PC-3 (cell line): ENCODE measurements at regions of chr17 and their contacts with region 1.

Region 1: DNA sequence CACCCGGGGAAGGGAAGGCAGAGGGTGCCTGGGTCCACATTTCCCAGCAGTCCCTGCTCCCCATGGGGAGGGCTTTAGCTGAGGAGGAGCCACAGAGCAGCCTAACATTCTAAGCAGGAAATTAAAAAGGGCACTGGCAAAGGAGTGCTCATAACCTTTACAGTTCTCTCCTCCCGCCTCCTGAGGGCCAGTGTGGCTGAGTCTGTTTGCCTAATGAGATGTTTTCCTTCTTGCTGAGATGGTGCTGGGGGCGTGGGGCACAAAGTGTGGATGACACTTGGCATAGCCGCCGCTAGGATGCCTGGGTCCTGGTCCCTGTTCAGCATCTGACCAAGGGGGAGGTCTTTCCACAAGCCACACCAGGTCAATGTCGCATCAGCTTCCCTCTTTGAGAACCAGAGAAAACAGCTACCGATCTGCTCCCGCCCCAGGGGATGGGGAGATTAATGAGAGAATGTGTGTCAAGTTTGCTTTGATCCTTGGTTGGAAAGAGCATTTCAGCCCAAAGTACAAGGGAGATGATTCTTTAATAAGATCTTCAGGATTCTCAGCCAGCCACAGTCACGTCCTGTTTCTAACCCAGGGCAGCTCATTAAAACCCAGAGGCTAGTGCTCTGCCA is 5.8 kb downstream of the KIF18B start:
- DNase-seq: no peak
- ATAC-seq: peak; percentile 64
- H3K4me3 ChIP-seq: no peak overlapping the region
- H3K27ac ChIP-seq: no peak overlapping the region
- H3K4me1 ChIP-seq: peaks cover 56% of the 10 kb centered on the region
- H3K27me3 ChIP-seq: no peaks in the 10 kb centered on the region
- CTCF ChIP-seq: no peak

Region 2: GRCh38 chr17:44844390-44844830 is 97.4 kb before region 1 on chr17:
- CTCF ChIA-PET with region 1: no interaction called
- POLR2A ChIA-PET with region 1: no interaction called
- intact Hi-C with region 1: no loop called
- DNase-seq: no peak
- ATAC-seq: no peak
- H3K4me3 ChIP-seq: no peak overlapping the region
- H3K27ac ChIP-seq: no peak overlapping the region
- H3K4me1 ChIP-seq: no peaks in the 10 kb centered on the region
- H3K27me3 ChIP-seq: no peaks in the 10 kb centered on the region
- CTCF ChIP-seq: no peak

Region 3: DNA sequence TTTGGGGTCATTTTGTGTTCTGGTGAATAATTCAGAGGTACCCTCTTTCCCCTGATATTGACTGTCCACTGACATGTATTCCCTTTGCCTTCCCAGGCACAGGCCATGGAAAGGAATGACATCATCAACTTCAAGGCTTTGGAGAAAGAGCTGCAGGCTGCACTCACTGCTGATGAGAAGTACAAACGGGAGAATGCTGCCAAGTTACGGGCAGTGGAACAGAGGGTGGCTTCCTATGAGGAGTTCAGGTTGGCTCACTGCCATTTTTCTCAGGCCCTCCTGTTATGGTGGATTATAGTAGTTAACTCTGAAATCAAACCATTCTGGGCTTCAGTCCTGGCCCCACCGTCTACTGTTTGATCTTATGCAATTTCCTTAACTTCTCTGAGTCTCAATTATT is 40.9 kb before region 1 on chr17:
- CTCF ChIA-PET with region 1: no interaction called
- POLR2A ChIA-PET with region 1: interaction called, 3 read pairs
- intact Hi-C with region 1: loop called (anchors 2 kb)
- DNase-seq: peak; percentile 76
- ATAC-seq: peak; percentile 37
- H3K4me3 ChIP-seq: no peak overlapping the region; the same call in 1 of the 2 replicates
- H3K27ac ChIP-seq: peak overlapping the region; percentile 63
- H3K4me1 ChIP-seq: peaks cover 41% of the 10 kb centered on the region
- H3K27me3 ChIP-seq: no peaks in the 10 kb centered on the region
- CTCF ChIP-seq: no peak

Region 4: DNA sequence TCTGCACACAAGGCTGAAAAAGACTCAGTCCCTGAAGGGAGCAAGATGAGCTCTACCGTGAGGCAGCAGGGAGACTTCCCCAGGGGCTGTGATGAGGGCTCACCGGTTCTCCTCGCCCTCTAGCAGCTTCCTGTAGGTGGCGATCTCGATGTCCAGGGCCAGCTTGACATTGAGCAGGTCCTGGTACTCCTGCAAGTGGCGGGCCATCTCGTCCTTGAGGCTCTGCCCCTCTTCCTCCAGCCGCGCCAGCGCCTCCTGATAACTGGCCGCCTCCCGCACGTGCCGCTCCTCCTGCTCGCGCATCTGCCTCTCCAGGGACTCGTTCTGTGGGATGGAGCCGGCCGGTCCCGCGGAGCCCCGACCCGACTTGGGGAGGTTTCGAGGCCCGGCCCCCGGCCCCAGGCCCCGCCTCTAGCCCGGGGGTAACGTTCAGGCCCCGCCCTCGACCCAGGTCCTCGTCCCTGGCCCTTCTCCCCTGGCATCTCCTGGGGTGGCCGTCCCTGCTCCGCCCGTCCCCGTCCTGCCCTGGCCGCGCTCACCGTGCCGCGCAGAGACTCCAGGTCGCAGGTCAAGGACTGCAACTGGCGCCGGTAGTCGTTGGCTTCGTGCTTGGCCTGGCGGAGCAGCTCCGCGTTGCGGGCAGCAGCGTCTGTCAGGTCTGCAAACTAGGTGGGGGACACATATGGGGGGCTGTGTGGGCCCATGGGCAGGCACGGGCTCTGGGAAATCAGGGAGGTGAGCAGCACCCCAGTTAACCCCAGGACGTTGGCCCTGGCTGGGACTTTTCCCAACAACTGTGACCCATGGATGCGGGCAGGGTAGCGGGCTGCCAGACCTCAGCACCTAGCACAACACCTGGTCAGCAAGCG is 30.5 kb before region 1 on chr17:
- CTCF ChIA-PET with region 1: no interaction called
- POLR2A ChIA-PET with region 1: interaction called, 12 read pairs
- intact Hi-C with region 1: no loop called
- DNase-seq: peak; percentile 48
- ATAC-seq: no peak; the same call in 1 of the 2 replicates
- H3K4me3 ChIP-seq: no peak overlapping the region
- H3K27ac ChIP-seq: no peak overlapping the region
- H3K4me1 ChIP-seq: peaks cover 30% of the 10 kb centered on the region
- H3K27me3 ChIP-seq: no peaks in the 10 kb centered on the region
- CTCF ChIP-seq: peak; percentile 61

Region 5: GRCh38 chr17:45006927-45007461 is 65.2 kb after region 1 on chr17:
- CTCF ChIA-PET with region 1: no interaction called
- POLR2A ChIA-PET with region 1: no interaction called
- intact Hi-C with region 1: no loop called
- DNase-seq: no peak
- ATAC-seq: 0 out of 2 replicates have a peak, but pooled peaks have one; percentile 24
- H3K4me3 ChIP-seq: no peak overlapping the region
- H3K27ac ChIP-seq: no peak overlapping the region
- H3K4me1 ChIP-seq: no peaks in the 10 kb centered on the region
- H3K27me3 ChIP-seq: no peaks in the 10 kb centered on the region
- CTCF ChIP-seq: 0 out of 2 replicates have a peak, but pooled peaks have one; percentile 17